CD8-positive, alpha-beta memory T cell (primary cell): ENCODE measurements at regions of chr2 and their contacts with region 1.

Region 1: GRCh38 chr2:9630749-9631483 is at the start of gene YWHAQ:
- DNase-seq: peak; percentile 94 to 99 (median 97)
- H3K4me3 ChIP-seq: peak within 1 kb of the TSS; percentile 81
- H3K4me3 Mint-ChIP-seq: peak within 1 kb of the TSS; percentile 94 to 98 (median 97)
- H3K27ac ChIP-seq: peak within 1 kb of the TSS; percentile 89
- H3K27ac Mint-ChIP-seq: peak within 1 kb of the TSS; percentile 94 to 99 (median 98)
- H3K4me1 ChIP-seq: peaks cover 44% of the 10 kb centered on the region
- H3K4me1 Mint-ChIP-seq: peaks cover 48 to 55% (median 51%) of the 10 kb centered on the region in 3 donors
- H3K27me3 ChIP-seq: no peaks in the 10 kb centered on the region
- H3K27me3 Mint-ChIP-seq: peaks cover 0 to 7% of the 10 kb centered on the region in 2 donors
- total RNA-seq, gene YWHAQ: 560 to 565 TPM

Region 2: DNA sequence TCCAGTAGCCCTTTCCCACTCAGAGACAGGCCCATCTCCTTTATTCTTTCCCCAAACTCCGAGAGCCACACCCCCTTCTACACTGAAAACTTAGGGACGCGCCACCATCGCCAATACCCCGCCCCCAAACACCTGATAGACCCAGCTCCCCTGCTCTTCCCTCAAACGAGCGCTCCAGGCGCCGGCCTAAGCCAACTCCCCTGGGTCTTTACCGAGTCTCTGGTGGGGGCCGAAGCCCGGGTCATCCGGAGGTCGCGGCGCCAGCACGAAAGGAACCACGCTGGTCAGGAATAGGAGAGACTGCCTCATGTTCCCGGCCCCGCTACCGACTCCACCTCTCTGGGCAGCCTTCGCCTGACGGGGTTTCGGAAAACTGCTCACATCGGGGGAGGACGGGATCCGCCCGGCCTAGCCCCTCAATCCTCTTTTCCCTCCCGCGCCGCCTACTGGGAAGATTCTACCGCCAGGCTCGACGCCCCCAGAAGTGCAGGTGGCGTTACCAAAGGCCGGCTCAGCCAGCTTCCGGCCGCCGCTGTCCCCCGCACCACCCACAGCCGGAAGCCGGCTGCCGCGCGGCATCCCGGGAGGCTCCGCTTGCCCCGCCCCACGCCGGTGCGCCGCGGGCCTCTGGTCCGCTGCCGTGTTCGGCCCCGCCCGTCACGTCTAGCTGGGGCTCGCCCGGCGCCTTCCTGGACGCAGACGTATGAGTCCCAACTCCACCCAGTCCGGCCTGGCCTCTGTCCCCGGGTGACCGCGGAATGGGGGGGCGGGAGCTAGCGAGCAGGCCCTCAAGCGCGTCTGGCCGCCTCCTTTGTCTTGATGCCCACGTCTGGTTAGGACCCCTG is 75.4 kb before region 1 on chr2 and contains the start of gene ADAM17:
- CTCF ChIA-PET with region 1: interaction called, 7 read pairs
- POLR2A ChIA-PET with region 1: interaction called, 38 read pairs
- DNase-seq: peak; percentile 80 to 88 (median 83)
- H3K4me3 ChIP-seq: peak within 1 kb of the TSS; percentile 97
- H3K4me3 Mint-ChIP-seq: peak within 1 kb of the TSS; percentile 93 to 98 (median 96)
- H3K27ac ChIP-seq: peak within 1 kb of the TSS; percentile 95
- H3K27ac Mint-ChIP-seq: peak within 1 kb of the TSS; percentile 82 to 99 (median 98)
- H3K4me1 ChIP-seq: peaks cover 43% of the 10 kb centered on the region
- H3K4me1 Mint-ChIP-seq: peaks cover 49 to 64% (median 64%) of the 10 kb centered on the region in 3 donors
- H3K27me3 ChIP-seq: no peaks in the 10 kb centered on the region
- H3K27me3 Mint-ChIP-seq: no peaks in the 10 kb centered on the region
- total RNA-seq, gene ADAM17: 17.9 to 20.9 TPM

Region 3: DNA sequence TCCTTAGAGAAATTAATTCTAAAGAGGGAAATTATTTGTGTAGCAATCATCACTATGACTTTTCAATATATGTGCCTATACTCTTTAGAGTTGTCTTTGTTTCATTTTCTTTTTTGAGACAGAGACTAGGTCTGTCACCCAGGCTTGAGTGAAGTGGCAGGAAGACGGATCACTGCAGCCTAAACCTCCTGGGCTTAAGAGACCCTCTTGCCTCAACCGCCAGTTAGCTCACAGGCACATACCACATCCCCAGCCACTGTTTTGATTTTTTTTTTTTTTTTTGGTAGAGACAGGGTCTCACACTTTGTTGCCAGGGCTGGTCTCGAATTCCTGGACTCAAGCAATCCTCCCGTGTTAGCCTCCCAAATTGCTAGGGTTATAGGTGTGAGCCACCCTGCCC is 12.5 kb before region 1 on chr2:
- CTCF ChIA-PET with region 1: interaction called, 12 read pairs
- POLR2A ChIA-PET with region 1: interaction called, 15 read pairs
- DNase-seq: peak; percentile 14 to 73 (median 57)
- H3K4me3 ChIP-seq: peak overlapping the region; percentile 6
- H3K4me3 Mint-ChIP-seq: peak overlapping the region; percentile 69 to 85 (median 81)
- H3K27ac ChIP-seq: peak overlapping the region; percentile 39
- H3K27ac Mint-ChIP-seq: peak overlapping the region; percentile 81 to 98 (median 92)
- H3K4me1 ChIP-seq: peaks cover 52% of the 10 kb centered on the region
- H3K4me1 Mint-ChIP-seq: peaks cover 90 to 99% (median 98%) of the 10 kb centered on the region in 3 donors
- H3K27me3 ChIP-seq: no peaks in the 10 kb centered on the region
- H3K27me3 Mint-ChIP-seq: no peaks in the 10 kb centered on the region

Region 4: GRCh38 chr2:9655441-9656269 is 24.7 kb after region 1 on chr2:
- CTCF ChIA-PET with region 1: no interaction called
- POLR2A ChIA-PET with region 1: interaction called, 13 read pairs
- DNase-seq: peak in 2 of 5 donors; percentile 16 to 24
- H3K4me3 ChIP-seq: no peak overlapping the region
- H3K4me3 Mint-ChIP-seq: peak overlapping the region in 6 of 7 donors; percentile 67 to 78 (median 74)
- H3K27ac ChIP-seq: no peak overlapping the region
- H3K27ac Mint-ChIP-seq: peak overlapping the region; percentile 83 to 94 (median 90)
- H3K4me1 ChIP-seq: peaks cover 19% of the 10 kb centered on the region
- H3K4me1 Mint-ChIP-seq: peaks cover 32 to 47% (median 38%) of the 10 kb centered on the region in 3 donors
- H3K27me3 ChIP-seq: no peaks in the 10 kb centered on the region
- H3K27me3 Mint-ChIP-seq: no peaks in the 10 kb centered on the region

Region 5: GRCh38 chr2:9703085-9703641 is 72.2 kb after region 1 on chr2:
- CTCF ChIA-PET with region 1: interaction called, 6 read pairs
- POLR2A ChIA-PET with region 1: interaction called, 29 read pairs
- DNase-seq: peak; percentile 66 to 97 (median 90)
- H3K4me3 ChIP-seq: no peak overlapping the region
- H3K4me3 Mint-ChIP-seq: peak overlapping the region; percentile 23 to 88 (median 74)
- H3K27ac ChIP-seq: peak overlapping the region; percentile 82
- H3K27ac Mint-ChIP-seq: peak overlapping the region; percentile 94 to 100 (median 98)
- H3K4me1 ChIP-seq: peaks cover 27% of the 10 kb centered on the region
- H3K4me1 Mint-ChIP-seq: peaks cover 46 to 72% (median 53%) of the 10 kb centered on the region in 3 donors
- H3K27me3 ChIP-seq: no peaks in the 10 kb centered on the region
- H3K27me3 Mint-ChIP-seq: peaks cover 0 to 3% of the 10 kb centered on the region in 2 donors